Psoas muscle (tissue), 8 donors: ENCODE measurements at regions of chr15 and their contacts with region 1.

Region 1: GRCh38 chr15:85730001-85730820 is 64.5 kb downstream of the KLHL25 start:
- DNase-seq: no peak
- ATAC-seq: peak; percentile 67 to 81 (median 74)
- H3K4me3 ChIP-seq: no peak overlapping the region
- H3K27ac ChIP-seq: no peak overlapping the region
- H3K4me1 ChIP-seq: no peaks in the 10 kb centered on the region
- H3K27me3 ChIP-seq: no peaks in the 10 kb centered on the region
- CTCF ChIP-seq: peak; percentile 78

Region 2: DNA sequence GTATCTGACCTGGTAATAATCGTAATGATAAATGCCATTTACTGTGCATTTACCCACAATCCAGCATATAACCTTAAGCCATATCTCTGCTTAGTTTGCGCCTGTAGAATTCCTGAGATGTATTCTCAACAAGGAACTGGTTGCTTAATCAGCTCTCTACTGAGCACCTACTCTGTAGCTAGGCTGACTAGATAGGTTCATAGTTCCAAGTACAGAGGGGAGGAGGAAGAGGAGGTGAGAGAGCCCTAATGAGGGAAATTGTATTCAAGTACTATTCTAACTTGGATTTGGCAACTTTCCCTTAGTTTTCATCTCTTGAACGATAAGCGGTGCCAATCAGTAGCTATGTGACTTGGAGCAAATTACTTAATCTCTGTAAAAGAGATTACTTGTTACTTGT is 355.4 kb before region 1 on chr15:
- intact Hi-C with region 1: no loop called
- DNase-seq: no peak
- ATAC-seq: no peak
- H3K4me3 ChIP-seq: no peak overlapping the region
- H3K27ac ChIP-seq: no peak overlapping the region
- H3K4me1 ChIP-seq: no peaks in the 10 kb centered on the region
- H3K27me3 ChIP-seq: no peaks in the 10 kb centered on the region
- CTCF ChIP-seq: no peak

Region 3: DNA sequence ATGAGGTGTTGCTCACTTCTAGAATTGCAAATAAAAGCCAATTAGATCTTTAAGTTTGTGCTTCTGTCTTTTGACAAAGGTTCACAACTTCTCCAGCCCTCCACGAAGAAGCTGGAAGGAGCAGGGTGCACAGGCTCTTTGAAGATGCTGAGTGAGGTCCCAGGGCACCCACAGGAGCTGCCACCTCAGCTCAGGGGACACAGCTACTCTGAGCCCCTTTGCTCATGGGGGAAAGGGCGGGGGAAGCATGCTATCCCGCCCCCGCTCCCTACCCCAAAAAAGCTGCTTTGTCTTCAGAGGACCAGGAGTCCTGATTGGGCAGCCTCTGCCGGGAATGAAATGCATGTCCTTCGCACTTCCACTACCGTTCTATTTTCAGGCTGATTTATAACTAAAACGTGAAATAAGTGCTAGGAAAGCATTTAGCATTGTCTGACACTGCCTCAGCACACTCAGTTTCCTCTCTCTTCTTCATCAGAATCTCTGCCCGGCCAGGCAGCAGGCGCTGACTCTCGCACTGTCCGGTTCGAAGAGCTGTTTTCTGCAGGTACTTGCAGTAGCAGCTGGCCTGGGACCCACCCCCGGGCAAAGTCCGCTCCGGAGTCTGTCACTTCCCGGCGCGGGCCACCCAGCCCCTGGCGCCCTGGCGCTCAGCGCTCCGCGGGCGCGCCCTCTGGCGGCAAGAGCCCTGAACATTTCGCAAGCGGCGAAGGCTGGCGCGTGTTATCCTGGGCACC is 110.0 kb after region 1 on chr15:
- intact Hi-C with region 1: loop called (anchors 2 kb)
- DNase-seq: peak; percentile 85 to 92
- ATAC-seq: peak; percentile 95 to 99 (median 98)
- H3K4me3 ChIP-seq: peak overlapping the region; percentile 50
- H3K27ac ChIP-seq: no peak overlapping the region
- H3K4me1 ChIP-seq: peaks cover 2% of the 10 kb centered on the region
- H3K27me3 ChIP-seq: no peaks in the 10 kb centered on the region
- CTCF ChIP-seq: peak; percentile 94